ENCODE measurements at regions of chr3 and their contacts with region 1.

Region 1: GRCh38 chr3:10322352-10322710 is 1.4 kb upstream of the SEC13 start:
- DNase-seq: peak; percentile 80
- H3K4me3 Mint-ChIP-seq: no peak overlapping the region
- H3K27ac Mint-ChIP-seq: no peak overlapping the region
- H3K4me1 Mint-ChIP-seq: peaks cover 23% of the 10 kb centered on the region
- H3K27me3 Mint-ChIP-seq: peaks cover 19% of the 10 kb centered on the region

Region 2: GRCh38 chr3:9843715-9844438 is 478.5 kb before region 1 on chr3 and contains the start of gene RPUSD3:
- intact Hi-C with region 1: loop called (anchors 5 kb)
- DNase-seq: peak; percentile 99
- H3K4me3 Mint-ChIP-seq: peak within 1 kb of the TSS; percentile 99
- H3K27ac Mint-ChIP-seq: peak within 1 kb of the TSS; percentile 98
- H3K4me1 Mint-ChIP-seq: peaks cover 26% of the 10 kb centered on the region
- H3K27me3 Mint-ChIP-seq: no peaks in the 10 kb centered on the region
- total RNA-seq, gene RPUSD3: 84.3 and 85.7 TPM in 2 replicates

Region 3: GRCh38 chr3:9986237-9986725 is 336.1 kb before region 1 on chr3:
- intact Hi-C with region 1: loop called (anchors 1 kb)
- DNase-seq: no peak
- H3K4me3 Mint-ChIP-seq: peak overlapping the region; percentile 97
- H3K27ac Mint-ChIP-seq: peak overlapping the region; percentile 99
- H3K4me1 Mint-ChIP-seq: peaks cover 31% of the 10 kb centered on the region
- H3K27me3 Mint-ChIP-seq: no peaks in the 10 kb centered on the region

Region 4: DNA sequence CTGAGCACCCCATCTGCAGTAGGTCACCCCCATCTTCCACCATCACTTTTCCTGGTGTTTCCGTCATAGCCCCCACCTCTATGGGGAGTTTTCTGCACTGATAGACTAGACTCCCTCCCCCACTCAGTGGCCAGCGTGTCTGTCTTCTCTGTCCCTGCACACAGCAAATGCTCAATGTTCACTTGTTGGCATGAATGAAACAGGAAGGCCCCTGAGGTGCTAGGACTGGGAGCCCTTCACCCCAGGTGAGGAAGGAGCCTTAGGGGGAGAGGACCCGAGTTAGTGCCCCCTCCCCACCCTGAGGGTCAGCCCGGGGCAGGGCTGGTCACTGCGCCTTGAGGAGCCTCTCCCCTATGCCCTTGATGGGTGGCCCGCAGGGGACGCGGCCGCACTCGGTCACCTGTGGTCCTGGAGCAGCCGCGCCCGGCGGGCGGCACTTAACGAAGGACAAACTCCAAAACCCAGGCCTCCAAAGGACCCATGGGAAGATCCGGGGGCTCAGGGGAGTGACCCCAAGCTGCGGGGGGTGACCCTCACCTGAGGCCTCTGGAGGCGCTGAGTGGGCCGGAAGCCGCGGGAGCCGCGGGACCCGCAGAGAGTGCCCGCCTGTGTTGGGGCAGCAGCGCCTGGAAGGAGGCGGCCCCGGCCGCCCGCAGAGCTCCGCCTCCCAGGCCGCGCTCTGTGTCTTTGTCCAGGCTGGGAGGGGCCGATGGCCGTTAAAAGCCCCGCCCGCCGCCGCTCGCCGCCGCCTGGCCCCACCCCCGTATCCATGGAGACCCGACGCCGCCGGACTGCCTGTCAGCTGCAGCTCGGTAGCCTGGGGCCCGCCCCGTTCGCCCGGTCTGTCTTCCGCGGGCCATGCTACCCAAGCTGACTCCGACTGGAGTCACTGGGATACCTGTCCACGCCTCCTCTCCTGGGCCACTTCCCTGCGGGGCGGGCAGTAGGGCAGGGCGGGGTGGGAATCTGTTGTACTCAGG is 311.6 kb before region 1 on chr3:
- intact Hi-C with region 1: loop called (anchors 1 kb)
- DNase-seq: peak; percentile 96
- H3K4me3 Mint-ChIP-seq: peak overlapping the region; percentile 61
- H3K27ac Mint-ChIP-seq: no peak overlapping the region
- H3K4me1 Mint-ChIP-seq: peaks cover 16% of the 10 kb centered on the region
- H3K27me3 Mint-ChIP-seq: peaks cover 2% of the 10 kb centered on the region

Region 5: GRCh38 chr3:10115326-10116137 is 206.8 kb before region 1 on chr3 and contains the start of gene BRK1:
- intact Hi-C with region 1: loop called (anchors 1 kb)
- DNase-seq: peak; percentile 97
- H3K4me3 Mint-ChIP-seq: peak within 1 kb of the TSS; percentile 98
- H3K27ac Mint-ChIP-seq: peak within 1 kb of the TSS; percentile 93
- H3K4me1 Mint-ChIP-seq: peaks cover 25% of the 10 kb centered on the region
- H3K27me3 Mint-ChIP-seq: peaks cover 2% of the 10 kb centered on the region
- total RNA-seq, gene BRK1: 98.8 and 99.6 TPM in 2 replicates

Region 6: DNA sequence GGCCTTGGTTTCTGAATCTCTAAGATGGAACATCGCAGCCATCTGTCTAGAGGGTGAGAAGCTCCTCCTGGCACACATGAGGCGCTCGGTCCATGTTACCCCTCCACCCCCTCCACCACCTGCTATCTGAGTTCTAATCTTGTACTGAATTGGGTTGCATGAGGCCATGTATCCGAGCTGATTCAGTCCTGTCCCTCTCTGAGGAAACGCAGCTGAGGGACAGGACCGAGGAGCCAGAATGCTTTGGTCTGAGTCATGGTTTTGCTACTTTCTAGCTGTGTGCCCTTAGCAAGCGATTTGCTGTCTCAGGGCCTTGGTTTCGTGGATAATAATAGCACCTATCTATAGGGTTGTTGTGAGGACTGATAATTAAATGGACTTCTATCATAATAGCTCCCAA is 86.3 kb after region 1 on chr3:
- intact Hi-C with region 1: no loop called
- DNase-seq: no peak
- H3K4me3 Mint-ChIP-seq: no peak overlapping the region
- H3K27ac Mint-ChIP-seq: no peak overlapping the region
- H3K4me1 Mint-ChIP-seq: no peaks in the 10 kb centered on the region
- H3K27me3 Mint-ChIP-seq: no peaks in the 10 kb centered on the region

Region 7: DNA sequence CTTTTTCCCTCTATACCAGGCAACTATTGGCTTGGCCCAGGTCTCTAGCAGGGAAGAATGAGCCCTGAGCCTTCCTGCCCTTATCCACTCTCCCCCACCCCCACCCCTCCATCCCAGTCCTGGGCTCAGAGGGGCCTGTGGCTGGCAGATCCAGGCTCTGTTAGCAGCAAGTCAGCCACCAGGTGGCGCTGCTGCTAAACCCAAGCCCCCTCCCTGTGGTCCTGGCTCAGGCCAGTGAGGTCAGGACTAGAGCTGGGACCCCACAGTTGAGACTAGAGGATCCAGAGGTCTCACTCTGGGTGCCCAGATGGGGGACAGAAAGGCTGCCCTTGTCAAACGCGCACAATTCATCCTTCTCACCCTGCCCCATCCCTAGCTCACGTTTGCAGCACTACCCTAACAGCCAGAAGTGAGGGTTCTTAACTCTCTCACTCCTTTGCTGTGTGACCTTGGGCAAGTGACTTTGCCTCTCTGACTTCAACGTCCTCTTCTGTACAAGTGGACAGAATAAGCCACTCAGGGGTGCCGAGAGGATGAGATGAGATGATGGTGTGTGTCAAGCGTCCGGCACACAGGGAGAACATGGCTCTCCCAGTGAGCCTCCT is 623.5 kb after region 1 on chr3:
- intact Hi-C with region 1: no loop called
- DNase-seq: peak; percentile 85
- H3K4me3 Mint-ChIP-seq: no peak overlapping the region
- H3K27ac Mint-ChIP-seq: no peak overlapping the region
- H3K4me1 Mint-ChIP-seq: no peaks in the 10 kb centered on the region
- H3K27me3 Mint-ChIP-seq: peaks cover 2% of the 10 kb centered on the region